Aorta (tissue), 5 donors: ENCODE measurements at regions of chr3 and their contacts with region 1.

Region 1: DNA sequence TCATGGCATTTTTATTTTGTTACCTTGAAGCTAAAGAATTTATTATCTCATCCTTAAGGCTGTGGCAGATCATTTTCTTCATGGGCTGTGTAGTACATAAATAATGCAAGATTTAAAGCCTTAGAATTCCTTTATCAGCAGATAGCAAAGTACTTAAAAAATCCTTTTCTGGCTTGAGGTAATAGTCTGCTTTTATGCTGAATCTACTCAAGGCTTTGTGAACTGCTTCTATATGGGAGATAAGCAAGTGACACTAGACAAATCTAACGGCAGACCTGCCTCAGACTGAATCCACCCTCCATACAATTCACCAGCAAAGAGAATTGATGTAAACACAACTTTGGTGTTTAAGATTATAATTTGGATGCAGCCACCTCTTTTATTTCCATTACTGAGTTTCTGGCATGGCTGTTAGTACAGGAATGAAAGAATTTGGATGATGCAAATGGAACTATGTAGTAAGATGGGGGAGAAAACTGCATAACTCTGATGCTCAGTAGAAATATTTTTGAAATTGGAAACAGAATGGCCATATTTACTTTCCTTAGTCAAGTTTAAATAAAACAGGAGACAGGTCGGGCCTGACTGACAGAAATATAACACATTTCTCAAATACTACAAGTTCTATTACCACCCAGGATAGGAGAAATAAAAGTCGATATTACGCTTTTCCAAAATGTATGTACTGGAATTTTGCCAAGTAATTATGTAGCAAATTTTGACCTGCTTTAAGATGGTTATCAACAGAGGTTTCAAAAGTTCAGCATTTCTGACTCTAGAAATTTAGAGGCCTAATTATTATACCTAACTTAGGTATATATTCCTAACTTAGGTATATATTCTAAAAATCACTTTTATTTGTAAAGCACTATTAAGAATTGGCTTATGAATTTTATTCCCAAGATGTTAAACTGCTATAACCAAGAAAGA is 1121.6 kb downstream of the NAALADL2 start:
- DNase-seq: no peak
- ATAC-seq: no peak
- H3K4me3 ChIP-seq: no peak overlapping the region
- H3K27ac ChIP-seq: no peak overlapping the region
- H3K4me1 ChIP-seq: no peaks in the 10 kb centered on the region
- H3K27me3 ChIP-seq: no peaks in the 10 kb centered on the region

Region 2: GRCh38 chr3:175136579-175136978 is 844.2 kb before region 1 on chr3:
- intact Hi-C with region 1: loop called in 1 of 2 experiments (anchors 10 kb)
- DNase-seq: no peak
- ATAC-seq: no peak
- H3K4me3 ChIP-seq: no peak overlapping the region
- H3K27ac ChIP-seq: no peak overlapping the region
- H3K4me1 ChIP-seq: no peaks in the 10 kb centered on the region
- H3K27me3 ChIP-seq: no peaks in the 10 kb centered on the region